Mammary epithelial cell (primary cell): ENCODE measurements at regions of chr4 and their contacts with region 1.

Region 1: DNA sequence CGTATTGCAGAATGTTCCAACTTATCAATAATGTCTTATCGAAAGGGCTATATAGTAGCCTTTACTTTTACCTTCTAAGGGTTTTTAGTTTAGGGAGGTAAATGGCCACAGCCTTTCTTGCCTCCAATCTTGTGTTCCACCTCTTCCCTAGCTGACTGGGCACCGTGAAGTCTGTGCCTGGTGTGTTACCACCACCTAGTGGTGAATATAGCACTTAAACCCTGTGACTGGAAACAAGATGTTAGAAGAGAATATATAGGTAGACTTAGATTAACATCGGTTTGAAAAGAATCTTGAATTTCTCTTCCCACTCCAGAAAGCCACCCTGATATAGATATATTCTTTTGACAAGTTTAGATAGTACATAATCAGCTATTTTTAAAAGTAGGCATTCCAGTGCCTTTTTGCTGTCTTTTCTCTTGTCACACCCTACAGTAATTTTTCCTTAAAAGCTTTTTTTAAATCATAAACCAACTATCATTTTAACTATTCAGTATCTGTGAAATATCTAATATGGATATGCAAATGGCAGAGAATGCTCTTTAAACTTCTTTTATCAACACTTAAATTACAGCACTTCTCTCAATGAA is 27.8 kb upstream of the ADH7 start:
- DNase-seq: peak; percentile 72
- H3K4me3 ChIP-seq: no peak overlapping the region
- H3K27ac ChIP-seq: peak overlapping the region; percentile 28
- H3K4me1 ChIP-seq: peaks cover 22% of the 10 kb centered on the region
- H3K27me3 ChIP-seq: no peaks in the 10 kb centered on the region
- CTCF ChIP-seq: peak; percentile 76 to 90

Region 2: DNA sequence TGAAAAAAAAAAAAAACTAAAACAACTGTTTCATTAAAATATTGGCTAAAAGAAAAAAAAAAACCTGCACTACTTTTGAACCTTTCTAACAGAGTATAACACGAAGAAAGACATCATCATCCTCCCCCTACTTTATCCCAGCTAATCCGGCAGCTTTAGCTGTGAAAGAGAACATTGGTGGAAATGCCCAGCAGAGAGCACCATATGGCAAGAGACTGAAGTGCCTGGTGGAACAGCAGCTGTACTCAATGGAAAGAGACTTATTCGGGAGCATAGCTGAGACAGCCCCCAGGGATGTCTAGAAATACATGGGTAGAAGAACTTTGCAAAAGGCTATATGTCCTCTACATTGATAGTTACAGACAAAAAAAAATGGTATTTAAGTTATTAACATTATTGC is 1350.0 kb before region 1 on chr4:
- CTCF ChIA-PET with region 1: no interaction called
- dilution Hi-C with region 1: no loop called
- in situ Hi-C with region 1: no loop called
- intact Hi-C with region 1: loop called (anchors 5 kb)
- DNase-seq: peak; percentile 17
- H3K4me3 ChIP-seq: no peak overlapping the region
- H3K27ac ChIP-seq: no peak overlapping the region
- H3K4me1 ChIP-seq: no peaks in the 10 kb centered on the region
- H3K27me3 ChIP-seq: peaks cover 3% of the 10 kb centered on the region
- CTCF ChIP-seq: peak; percentile 42 to 56

Region 3: DNA sequence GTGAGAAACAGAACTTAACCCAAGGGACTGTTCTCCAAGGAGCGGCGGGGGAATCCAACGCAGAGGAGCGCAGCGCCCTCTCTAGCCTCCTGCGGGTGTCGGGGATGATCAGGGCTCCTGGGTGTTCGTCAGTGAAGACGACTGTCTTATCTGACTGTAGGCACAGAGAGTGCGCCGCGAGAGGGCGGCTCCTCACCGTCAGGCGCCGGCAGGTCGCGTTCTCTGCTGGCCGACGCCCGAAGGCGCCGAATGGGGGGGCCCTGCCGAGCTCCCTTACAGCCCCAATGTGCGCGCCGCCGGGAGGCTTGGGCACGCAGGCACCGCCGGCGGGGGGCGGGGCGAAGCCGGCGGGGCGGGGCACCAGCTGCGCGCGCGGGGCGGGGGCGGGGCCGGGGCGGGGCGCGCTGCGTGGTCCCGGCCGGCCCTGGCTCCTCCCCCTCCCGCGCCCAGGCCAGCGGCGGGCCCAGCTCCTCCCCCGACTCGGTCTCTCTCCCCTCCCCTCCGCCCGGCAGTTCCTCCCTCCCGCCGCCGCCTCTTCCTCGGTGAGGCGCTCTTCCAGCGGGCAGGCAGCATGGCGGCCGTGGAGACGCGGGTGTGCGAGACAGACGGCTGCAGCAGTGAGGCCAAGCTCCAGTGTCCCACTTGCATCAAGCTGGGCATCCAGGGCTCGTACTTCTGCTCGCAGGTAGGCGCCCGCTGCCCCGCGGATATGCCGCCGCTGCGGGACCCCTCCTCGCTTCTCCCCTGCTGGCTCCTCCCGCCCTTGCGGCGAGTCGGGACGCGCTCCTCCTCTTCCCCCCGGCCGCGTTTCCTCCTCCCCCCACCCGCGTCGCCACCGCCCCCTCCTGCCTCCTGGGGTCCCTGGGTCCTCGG is 467.6 kb before region 1 on chr4 and contains the start of gene METAP1:
- CTCF ChIA-PET with region 1: interaction called, 4 read pairs
- dilution Hi-C with region 1: no loop called
- in situ Hi-C with region 1: no loop called
- intact Hi-C with region 1: loop called (anchors 1 kb)
- DNase-seq: peak; percentile 97
- H3K4me3 ChIP-seq: peak within 1 kb of the TSS; percentile 94 to 98 (median 97)
- H3K27ac ChIP-seq: peak within 1 kb of the TSS; percentile 81
- H3K4me1 ChIP-seq: peaks cover 27% of the 10 kb centered on the region
- H3K27me3 ChIP-seq: no peaks in the 10 kb centered on the region
- CTCF ChIP-seq: peak; percentile 34 to 79
- total RNA-seq, gene METAP1: 67.7 to 72.7 TPM

Region 4: GRCh38 chr4:99100876-99101275 is 362.1 kb before region 1 on chr4:
- CTCF ChIA-PET with region 1: no interaction called
- dilution Hi-C with region 1: loop called (anchors 5 kb)
- in situ Hi-C with region 1: no loop called
- intact Hi-C with region 1: no loop called
- DNase-seq: no peak
- H3K4me3 ChIP-seq: no peak overlapping the region
- H3K27ac ChIP-seq: no peak overlapping the region
- H3K4me1 ChIP-seq: no peaks in the 10 kb centered on the region
- H3K27me3 ChIP-seq: no peaks in the 10 kb centered on the region
- CTCF ChIP-seq: no peak

Region 5: DNA sequence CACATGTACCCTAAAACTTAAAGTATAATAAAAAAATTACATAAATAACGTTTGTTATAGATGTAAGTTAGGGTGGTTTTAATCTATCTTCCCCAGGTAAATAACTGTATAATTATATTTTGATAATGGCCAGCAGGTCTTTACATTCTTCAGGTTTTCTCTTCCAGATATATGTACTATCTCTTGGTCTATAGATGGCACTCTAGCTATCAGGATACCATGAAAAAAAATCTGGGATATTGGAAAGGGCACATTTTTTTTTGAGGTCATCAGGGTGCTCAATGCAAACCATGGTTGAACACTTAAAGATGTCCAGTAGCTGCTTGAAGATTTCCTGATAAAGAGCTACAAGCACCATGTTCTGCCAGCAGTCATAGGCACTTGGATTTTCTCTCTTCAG is 303.3 kb before region 1 on chr4:
- CTCF ChIA-PET with region 1: no interaction called
- dilution Hi-C with region 1: no loop called
- in situ Hi-C with region 1: no loop called
- intact Hi-C with region 1: loop called (anchors 2 kb)
- DNase-seq: no peak
- H3K4me3 ChIP-seq: no peak overlapping the region
- H3K27ac ChIP-seq: no peak overlapping the region
- H3K4me1 ChIP-seq: no peaks in the 10 kb centered on the region
- H3K27me3 ChIP-seq: no peaks in the 10 kb centered on the region
- CTCF ChIP-seq: peak; percentile 21 to 34

Region 6: DNA sequence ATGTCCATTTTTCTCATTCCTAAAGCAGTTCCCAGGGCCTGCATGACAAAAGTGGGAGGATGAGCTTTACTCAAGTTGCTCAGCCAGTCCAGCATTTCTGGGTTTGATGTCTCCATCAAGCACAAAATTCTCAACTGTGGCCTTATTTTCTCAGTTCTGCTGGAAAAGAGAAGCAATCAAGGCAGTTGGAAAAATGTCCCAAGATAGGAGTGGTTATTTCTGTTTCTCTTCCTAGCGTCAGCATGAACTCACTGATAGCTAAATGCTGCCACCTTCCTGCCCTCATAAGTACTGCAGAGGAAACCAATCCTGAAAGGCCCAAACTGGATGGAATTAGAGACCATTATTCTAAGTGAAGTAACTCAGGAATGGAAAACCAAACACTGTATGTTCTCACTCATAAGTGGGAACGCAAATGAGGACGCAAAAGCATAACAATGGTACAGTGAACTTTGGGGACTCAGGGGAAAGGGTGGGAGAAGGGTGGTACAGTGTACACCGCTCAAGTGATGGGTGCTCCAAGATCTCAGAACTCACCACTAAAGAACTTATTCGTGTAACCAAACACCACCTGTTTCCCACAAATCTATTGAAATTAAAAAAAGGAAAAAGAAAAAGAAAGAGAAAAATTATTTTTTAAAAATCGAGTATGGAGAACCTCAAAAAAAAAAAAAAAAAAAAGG is 57.4 kb before region 1 on chr4:
- CTCF ChIA-PET with region 1: interaction called, 4 read pairs
- dilution Hi-C with region 1: no loop called
- in situ Hi-C with region 1: no loop called
- intact Hi-C with region 1: loop called (anchors 1 kb)
- DNase-seq: peak; percentile 66
- H3K4me3 ChIP-seq: no peak overlapping the region
- H3K27ac ChIP-seq: peak overlapping the region; percentile 88
- H3K4me1 ChIP-seq: peaks cover 17% of the 10 kb centered on the region
- H3K27me3 ChIP-seq: no peaks in the 10 kb centered on the region
- CTCF ChIP-seq: peak; percentile 92 to 94

Region 7: DNA sequence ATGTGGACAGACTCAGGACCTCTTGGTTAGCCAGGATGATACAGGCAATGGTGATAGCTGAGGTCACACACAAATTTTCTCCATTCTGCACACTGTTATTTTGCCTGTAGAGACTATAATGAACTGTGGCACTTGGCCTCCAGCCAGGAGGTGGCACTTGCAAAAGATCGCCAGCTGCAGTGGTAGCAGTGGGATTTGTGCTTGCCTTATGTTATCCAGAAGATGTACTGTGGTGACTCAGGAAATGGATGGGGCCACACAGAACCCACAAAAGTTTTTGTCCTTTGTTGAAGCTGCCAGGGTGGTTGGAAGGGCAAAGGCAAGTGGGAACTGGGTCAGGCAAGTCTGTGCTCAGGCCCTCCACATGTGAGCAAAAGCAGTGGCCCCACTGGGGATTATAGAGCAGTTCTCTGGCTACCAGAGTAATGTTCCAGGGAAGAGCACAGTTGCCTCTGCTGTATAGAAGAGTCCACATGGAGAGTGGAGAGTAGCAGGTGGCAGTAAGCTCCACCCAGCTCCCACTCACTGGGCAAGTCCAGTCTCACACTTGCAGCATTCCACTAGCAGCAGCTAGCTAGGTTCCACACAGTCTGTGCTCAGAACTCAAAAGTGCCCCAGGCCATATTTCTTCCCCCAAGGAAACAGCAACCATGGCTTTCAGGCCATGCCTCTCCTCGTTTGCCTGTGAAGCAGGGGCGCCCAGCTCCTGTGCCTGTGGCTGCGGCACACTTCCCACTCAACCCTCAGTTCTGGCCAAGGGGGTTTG is 42.0 kb after region 1 on chr4:
- CTCF ChIA-PET with region 1: no interaction called
- dilution Hi-C with region 1: no loop called
- in situ Hi-C with region 1: no loop called
- intact Hi-C with region 1: no loop called
- DNase-seq: peak; percentile 9
- H3K4me3 ChIP-seq: no peak overlapping the region
- H3K27ac ChIP-seq: no peak overlapping the region
- H3K4me1 ChIP-seq: peaks cover 7% of the 10 kb centered on the region
- H3K27me3 ChIP-seq: peaks cover 3% of the 10 kb centered on the region
- CTCF ChIP-seq: no peak

Region 8: GRCh38 chr4:99808260-99808857 is 345.4 kb after region 1 on chr4:
- CTCF ChIA-PET with region 1: interaction called, 5 read pairs
- dilution Hi-C with region 1: no loop called
- in situ Hi-C with region 1: no loop called
- intact Hi-C with region 1: loop called (anchors 1 kb)
- DNase-seq: peak; percentile 58
- H3K4me3 ChIP-seq: no peak overlapping the region
- H3K27ac ChIP-seq: no peak overlapping the region
- H3K4me1 ChIP-seq: no peaks in the 10 kb centered on the region
- H3K27me3 ChIP-seq: peaks cover 3% of the 10 kb centered on the region
- CTCF ChIP-seq: peak; percentile 81 to 90